ENCODE measurements at regions of chr3 and their contacts with region 1.

Region 1: DNA sequence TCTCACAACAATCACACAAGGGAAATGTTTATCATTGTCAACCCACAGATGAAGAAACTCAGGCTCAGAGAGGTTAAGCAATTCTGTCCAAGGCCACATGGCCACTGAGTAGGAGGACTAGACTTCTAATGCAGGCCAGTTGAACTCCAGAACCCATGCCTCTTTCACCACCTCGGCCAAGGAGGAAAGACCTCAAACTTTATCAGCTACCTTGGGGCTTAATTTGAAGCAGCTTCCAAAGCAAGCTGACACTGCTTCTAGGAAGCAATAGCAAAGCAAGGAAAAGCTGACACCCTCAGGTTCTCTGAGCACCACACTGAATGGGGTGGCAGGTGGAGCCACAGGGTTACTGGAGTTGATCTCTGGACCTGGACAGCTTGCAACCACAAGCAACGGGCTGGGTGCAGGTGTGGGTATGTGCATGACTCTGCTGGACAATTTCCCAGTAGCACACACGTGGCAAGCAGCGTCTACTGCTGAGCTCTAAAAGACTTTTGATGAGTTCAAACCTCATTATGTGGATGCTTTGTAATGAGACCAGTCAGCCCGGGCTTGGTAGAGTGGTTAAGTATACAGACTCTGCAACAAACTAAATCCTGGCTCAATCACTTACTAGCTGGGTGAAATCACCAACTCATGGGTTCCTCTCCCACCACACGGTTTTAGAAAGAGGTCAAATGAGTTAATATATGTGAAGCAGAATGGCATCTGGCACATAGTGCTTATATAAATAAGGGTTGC is 23.1 kb downstream of the CCNL1 start:
- DNase-seq: no peak
- H3K4me3 ChIP-seq: no peak overlapping the region
- H3K27ac ChIP-seq: no peak overlapping the region
- H3K4me1 ChIP-seq: peaks cover 4 to 27% of the 10 kb centered on the region in 2 experiments; a peak in 3 of 4 replicates
- H3K27me3 ChIP-seq: no peaks in the 10 kb centered on the region
- CTCF ChIP-seq: no peak
- EP300 ChIP-seq: no peak
- RAD21 ChIP-seq: no peak

Region 2: GRCh38 chr3:156978481-156978961 is 158.3 kb before region 1 on chr3:
- CTCF ChIA-PET with region 1: no interaction called
- POLR2A ChIA-PET with region 1: no interaction called
- DNase-seq: no peak
- H3K4me3 ChIP-seq: no peak overlapping the region
- H3K27ac ChIP-seq: no peak overlapping the region
- H3K4me1 ChIP-seq: peaks cover 0 to 4% of the 10 kb centered on the region in 2 experiments; a peak in 2 of 4 replicates
- H3K27me3 ChIP-seq: 0 out of 2 replicates have a peak, but pooled peaks cover 5% of the 10 kb centered on the region
- CTCF ChIP-seq: no peak
- EP300 ChIP-seq: no peak
- RAD21 ChIP-seq: no peak

Region 3: GRCh38 chr3:157081681-157082210 is 55.1 kb before region 1 on chr3:
- CTCF ChIA-PET with region 1: interaction called, 40 read pairs
- POLR2A ChIA-PET with region 1: no interaction called
- DNase-seq: peak; percentile 84
- H3K4me3 ChIP-seq: no peak overlapping the region; a peak in 1 of 4 replicates
- H3K27ac ChIP-seq: peak overlapping the region; percentile 43 to 58; a peak in 2 of 4 replicates
- H3K4me1 ChIP-seq: peaks cover 18 to 27% of the 10 kb centered on the region in 2 experiments; a peak in 3 of 4 replicates
- H3K27me3 ChIP-seq: no peaks in the 10 kb centered on the region
- CTCF ChIP-seq: peak; percentile 96
- EP300 ChIP-seq: no peak
- RAD21 ChIP-seq: peak; percentile 98

Region 4: GRCh38 chr3:157099326-157100095 is 37.3 kb before region 1 on chr3:
- CTCF ChIA-PET with region 1: interaction called, 26 read pairs
- POLR2A ChIA-PET with region 1: no interaction called
- DNase-seq: no peak
- H3K4me3 ChIP-seq: no peak overlapping the region
- H3K27ac ChIP-seq: no peak overlapping the region
- H3K4me1 ChIP-seq: peaks cover 4 to 10% of the 10 kb centered on the region in 2 experiments; a peak in 2 of 4 replicates
- H3K27me3 ChIP-seq: no peaks in the 10 kb centered on the region
- CTCF ChIP-seq: no peak
- EP300 ChIP-seq: no peak
- RAD21 ChIP-seq: no peak

Region 5: DNA sequence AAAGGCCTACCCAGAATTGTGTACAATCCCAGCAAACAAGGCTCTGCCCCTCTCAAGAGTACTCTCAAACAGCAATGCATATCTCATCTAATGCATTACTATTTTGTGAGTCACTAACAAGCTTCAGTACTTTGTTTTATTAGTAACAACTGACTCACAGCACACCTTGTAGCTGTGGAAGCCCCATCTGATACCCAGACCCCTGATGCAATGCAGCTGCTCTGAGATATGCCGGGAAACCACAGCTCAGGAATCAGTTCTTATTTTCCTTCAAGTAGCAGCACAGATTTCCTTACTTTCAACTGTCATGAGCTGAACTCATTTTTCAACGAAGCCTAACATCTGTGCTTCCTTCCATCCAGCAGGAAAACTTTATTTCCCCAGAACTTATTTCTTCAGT is 14.7 kb before region 1 on chr3:
- CTCF ChIA-PET with region 1: interaction called, 57 read pairs
- POLR2A ChIA-PET with region 1: no interaction called
- DNase-seq: no peak
- H3K4me3 ChIP-seq: no peak overlapping the region
- H3K27ac ChIP-seq: peak overlapping the region; percentile 34 to 58
- H3K4me1 ChIP-seq: peaks cover 0 to 30% of the 10 kb centered on the region in 2 experiments; a peak in 3 of 4 replicates
- H3K27me3 ChIP-seq: no peaks in the 10 kb centered on the region
- CTCF ChIP-seq: no peak
- EP300 ChIP-seq: peak in 1 of 2 experiments; percentile 89; a peak in 2 of 4 replicates
- RAD21 ChIP-seq: no peak

Region 6: GRCh38 chr3:157159762-157160657 is 23.2 kb after region 1 on chr3 and contains the start of gene CCNL1:
- CTCF ChIA-PET with region 1: interaction called, 24 read pairs
- POLR2A ChIA-PET with region 1: no interaction called
- DNase-seq: peak; percentile 94
- H3K4me3 ChIP-seq: peak within 1 kb of the TSS; percentile 74 to 98
- H3K27ac ChIP-seq: peak within 1 kb of the TSS; percentile 99 to 100
- H3K4me1 ChIP-seq: peaks cover 29 to 37% of the 10 kb centered on the region in 2 experiments
- H3K27me3 ChIP-seq: no peaks in the 10 kb centered on the region
- CTCF ChIP-seq: no peak
- EP300 ChIP-seq: peak; percentile 43 to 52; a peak in 2 of 4 replicates
- RAD21 ChIP-seq: no peak
- polyA plus RNA-seq, gene CCNL1: 99.8 and 131 TPM in 2 replicates

Measured in SK-N-SH (cell line).